Transverse colon (tissue), 4 donors: ENCODE measurements at regions of chr20 and their contacts with region 1.

Region 1: GRCh38 chr20:10990625-10991382 is 317.0 kb upstream of the JAG1 start:
- DNase-seq: no peak
- H3K4me3 ChIP-seq: no peak overlapping the region
- H3K27ac ChIP-seq: no peak overlapping the region
- H3K4me1 ChIP-seq: peaks cover 0 to 11% (median 0%) of the 10 kb centered on the region in 4 donors
- H3K27me3 ChIP-seq: no peaks in the 10 kb centered on the region
- CTCF ChIP-seq: no peak
- EP300 ChIP-seq: no peak
- POLR2A ChIP-seq: no peak

Region 2: DNA sequence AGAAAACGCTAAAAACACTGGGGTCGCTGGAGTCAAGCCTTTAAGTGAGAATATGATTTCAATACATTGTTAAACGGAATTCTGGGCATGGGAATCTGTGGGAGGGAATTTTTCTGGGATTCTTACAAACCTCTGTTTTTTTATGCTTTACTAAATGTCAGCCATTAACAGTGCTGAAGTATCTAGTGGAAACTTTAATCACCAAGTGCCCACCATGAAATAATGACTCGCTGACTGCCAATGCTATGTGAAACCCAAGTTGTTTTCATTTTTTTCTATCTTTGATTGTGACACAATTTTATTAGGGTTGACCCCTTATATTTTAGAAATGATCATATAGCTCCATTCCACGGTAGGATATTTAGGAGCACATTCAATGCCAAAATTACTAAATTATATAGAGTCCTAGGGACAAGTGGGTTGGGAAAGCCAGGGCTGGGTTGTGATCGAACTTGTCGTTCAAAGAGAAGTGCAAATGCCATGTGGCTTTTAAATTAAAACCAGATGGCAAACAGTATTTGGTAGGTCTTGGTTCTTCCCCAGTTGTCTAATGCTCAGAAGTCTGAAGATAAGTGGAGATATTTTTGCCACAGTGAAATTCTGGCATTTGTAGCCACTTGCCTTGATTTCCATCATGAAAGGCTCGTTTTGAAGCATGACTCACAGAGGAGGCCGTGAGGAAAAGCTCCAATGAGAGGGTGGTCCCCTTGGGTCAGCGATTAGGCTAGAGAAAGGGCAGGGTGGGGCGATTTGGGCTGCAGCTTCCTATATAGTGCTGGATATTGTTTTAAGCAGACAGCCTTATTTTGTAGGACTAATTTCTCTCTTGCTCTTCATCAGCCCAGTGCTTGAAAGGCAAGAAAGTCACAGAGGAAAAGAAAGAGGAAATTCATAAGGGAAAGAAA is 62.6 kb before region 1 on chr20:
- in situ Hi-C with region 1: no loop called
- intact Hi-C with region 1: loop called (anchors 2 kb)
- DNase-seq: no peak
- H3K4me3 ChIP-seq: no peak overlapping the region
- H3K27ac ChIP-seq: no peak overlapping the region
- H3K4me1 ChIP-seq: peaks cover 0 to 6% (median 0%) of the 10 kb centered on the region in 4 donors
- H3K27me3 ChIP-seq: no peaks in the 10 kb centered on the region
- CTCF ChIP-seq: no peak
- EP300 ChIP-seq: no peak
- POLR2A ChIP-seq: no peak